Gastrocnemius medialis (tissue), 4 donors: ENCODE measurements at regions of chr16 and their contacts with region 1.

Region 1: DNA sequence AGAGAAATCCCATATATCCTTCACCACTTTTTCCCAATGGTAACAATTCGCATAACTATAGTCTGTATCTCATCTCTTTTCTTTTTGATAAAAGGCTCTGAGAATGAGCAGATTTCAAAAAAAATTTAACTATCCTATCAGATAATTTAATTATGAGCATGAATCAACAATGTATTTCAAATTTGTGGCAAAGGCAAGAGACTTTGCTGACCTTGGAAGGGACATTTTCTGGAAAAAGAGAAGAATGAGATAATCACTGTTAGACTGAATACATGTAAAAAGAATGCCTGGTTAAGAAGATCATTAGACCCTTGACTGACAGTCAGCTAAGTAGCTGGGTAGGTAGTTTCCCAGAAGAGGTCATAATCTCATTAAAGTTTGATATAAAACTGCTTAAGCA is 428.4 kb upstream of the XYLT1 start:
- DNase-seq: no peak
- ATAC-seq: no peak
- H3K4me3 ChIP-seq: no peak overlapping the region
- H3K27ac ChIP-seq: no peak overlapping the region
- H3K4me1 ChIP-seq: no peaks in the 10 kb centered on the region
- H3K27me3 ChIP-seq: no peaks in the 10 kb centered on the region
- CTCF ChIP-seq: no peak
- POLR2A ChIP-seq: no peak

Region 2: GRCh38 chr16:17683281-17683680 is 215.9 kb before region 1 on chr16:
- in situ Hi-C with region 1: no loop called
- intact Hi-C with region 1: no loop called
- DNase-seq: no peak
- ATAC-seq: no peak
- H3K4me3 ChIP-seq: no peak overlapping the region
- H3K27ac ChIP-seq: no peak overlapping the region
- H3K4me1 ChIP-seq: no peaks in the 10 kb centered on the region
- H3K27me3 ChIP-seq: no peaks in the 10 kb centered on the region
- CTCF ChIP-seq: no peak
- POLR2A ChIP-seq: no peak

Region 3: GRCh38 chr16:17768257-17768656 is 130.9 kb before region 1 on chr16:
- in situ Hi-C with region 1: no loop called
- intact Hi-C with region 1: no loop called
- DNase-seq: no peak
- ATAC-seq: peak in 1 of 2 donors; percentile 52
- H3K4me3 ChIP-seq: no peak overlapping the region
- H3K27ac ChIP-seq: no peak overlapping the region
- H3K4me1 ChIP-seq: no peaks in the 10 kb centered on the region
- H3K27me3 ChIP-seq: no peaks in the 10 kb centered on the region
- CTCF ChIP-seq: no peak
- POLR2A ChIP-seq: no peak

Region 4: DNA sequence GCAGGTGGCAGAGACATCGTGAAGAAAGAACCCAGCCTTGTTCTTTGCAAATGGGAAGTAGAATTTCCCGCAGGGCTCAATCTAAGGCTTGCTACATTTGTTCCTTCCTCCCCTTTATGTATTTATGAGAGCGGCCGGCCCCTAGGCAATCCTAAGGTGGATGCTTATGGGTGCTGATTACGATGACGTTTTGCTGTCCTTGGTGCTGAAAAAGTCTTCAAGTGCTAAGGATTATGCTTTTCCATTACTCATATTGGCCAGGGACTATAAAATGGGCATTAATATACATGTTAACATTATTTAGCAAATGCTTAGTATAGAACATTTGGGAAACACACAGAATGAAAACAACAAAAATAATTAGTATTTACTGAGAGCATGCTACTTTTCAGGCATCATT is 115.1 kb before region 1 on chr16:
- in situ Hi-C with region 1: no loop called
- intact Hi-C with region 1: no loop called
- DNase-seq: no peak
- ATAC-seq: no peak
- H3K4me3 ChIP-seq: no peak overlapping the region
- H3K27ac ChIP-seq: no peak overlapping the region
- H3K4me1 ChIP-seq: no peaks in the 10 kb centered on the region
- H3K27me3 ChIP-seq: no peaks in the 10 kb centered on the region
- CTCF ChIP-seq: no peak
- POLR2A ChIP-seq: no peak

Region 5: DNA sequence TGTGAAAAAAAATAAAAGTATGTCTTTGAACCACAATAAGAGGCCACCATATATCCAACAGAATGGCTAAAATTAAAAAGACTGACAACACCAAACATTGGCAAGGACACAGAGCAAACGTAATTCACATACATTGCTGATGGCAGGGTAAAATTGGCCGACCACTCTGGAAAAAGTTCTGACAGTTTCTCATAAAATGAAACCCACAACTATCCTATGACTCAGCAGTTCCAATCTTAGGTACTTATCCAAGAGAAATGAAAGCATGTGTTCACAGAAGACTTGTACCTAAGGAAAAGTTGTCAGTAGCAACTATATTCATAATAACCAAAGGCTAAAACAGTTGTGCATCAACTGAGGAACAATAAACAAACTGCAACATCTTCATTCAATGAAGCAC is 71.1 kb before region 1 on chr16:
- in situ Hi-C with region 1: no loop called
- intact Hi-C with region 1: no loop called
- DNase-seq: no peak
- ATAC-seq: no peak
- H3K4me3 ChIP-seq: no peak overlapping the region
- H3K27ac ChIP-seq: no peak overlapping the region
- H3K4me1 ChIP-seq: no peaks in the 10 kb centered on the region
- H3K27me3 ChIP-seq: no peaks in the 10 kb centered on the region
- CTCF ChIP-seq: no peak
- POLR2A ChIP-seq: no peak

Region 6: GRCh38 chr16:17915791-17916190 is 16.6 kb after region 1 on chr16:
- in situ Hi-C with region 1: no loop called
- intact Hi-C with region 1: loop called (anchors 1 kb)
- DNase-seq: no peak
- ATAC-seq: no peak
- H3K4me3 ChIP-seq: no peak overlapping the region
- H3K27ac ChIP-seq: no peak overlapping the region
- H3K4me1 ChIP-seq: no peaks in the 10 kb centered on the region
- H3K27me3 ChIP-seq: peaks cover 0 to 2% (median 0%) of the 10 kb centered on the region in 3 donors
- CTCF ChIP-seq: no peak
- POLR2A ChIP-seq: no peak